ENCODE measurements at regions of chr6 and their contacts with region 1.

Region 1: DNA sequence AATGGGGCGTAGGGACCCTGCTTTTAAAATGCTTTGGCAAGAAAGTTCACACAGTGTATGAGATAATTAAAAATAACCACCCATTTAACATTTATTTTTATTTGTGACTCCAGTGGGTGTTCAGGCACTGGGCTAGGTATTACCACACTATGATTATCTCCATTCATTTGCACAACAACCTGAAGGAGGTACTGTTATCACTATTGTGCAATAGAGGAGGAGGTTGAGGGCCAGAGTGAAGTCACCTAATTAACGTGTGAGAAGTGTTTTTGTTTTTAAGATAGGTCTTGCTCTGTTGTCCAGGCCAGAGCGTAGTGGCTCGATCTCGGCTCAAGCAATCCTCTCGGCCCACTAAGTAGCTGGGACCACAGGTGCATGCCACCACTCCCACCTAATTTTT is 29.2 kb downstream of the MAK start:
- DNase-seq: no peak
- H3K4me3 ChIP-seq: no peak overlapping the region
- H3K27ac ChIP-seq: no peak overlapping the region
- H3K4me1 ChIP-seq: no peaks in the 10 kb centered on the region
- CTCF ChIP-seq: no peak

Region 2: DNA sequence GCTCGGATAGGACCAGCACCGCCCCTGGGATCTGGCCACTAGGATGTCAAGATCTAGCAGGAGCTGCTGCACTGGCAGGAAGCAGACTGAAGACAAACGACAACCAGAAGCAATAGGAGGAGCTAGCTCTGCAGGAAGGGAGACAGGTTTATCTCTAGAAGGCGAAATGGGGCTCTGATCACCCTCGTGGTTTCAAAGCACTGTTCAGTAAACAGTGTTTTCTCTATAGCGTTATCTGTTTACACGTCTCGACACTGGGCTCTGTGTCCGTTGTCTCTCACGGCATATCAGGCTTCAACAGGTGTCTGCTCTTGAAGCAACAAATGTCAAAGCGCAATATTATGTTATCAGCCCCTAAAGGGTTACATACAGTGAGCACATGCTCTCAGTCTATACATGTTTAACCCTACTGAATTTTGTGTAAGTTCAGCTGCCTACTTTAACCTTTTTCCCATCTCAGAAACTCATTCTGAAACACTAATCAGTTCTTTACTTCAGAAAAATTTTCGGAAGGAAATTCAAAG is 37.7 kb before region 1 on chr6:
- CTCF ChIA-PET with region 1: no interaction called
- POLR2A ChIA-PET with region 1: interaction called, 10 read pairs
- intact Hi-C with region 1: no loop called
- DNase-seq: no peak
- H3K4me3 ChIP-seq: no peak overlapping the region
- H3K27ac ChIP-seq: no peak overlapping the region
- H3K4me1 ChIP-seq: no peaks in the 10 kb centered on the region
- CTCF ChIP-seq: no peak

Region 3: DNA sequence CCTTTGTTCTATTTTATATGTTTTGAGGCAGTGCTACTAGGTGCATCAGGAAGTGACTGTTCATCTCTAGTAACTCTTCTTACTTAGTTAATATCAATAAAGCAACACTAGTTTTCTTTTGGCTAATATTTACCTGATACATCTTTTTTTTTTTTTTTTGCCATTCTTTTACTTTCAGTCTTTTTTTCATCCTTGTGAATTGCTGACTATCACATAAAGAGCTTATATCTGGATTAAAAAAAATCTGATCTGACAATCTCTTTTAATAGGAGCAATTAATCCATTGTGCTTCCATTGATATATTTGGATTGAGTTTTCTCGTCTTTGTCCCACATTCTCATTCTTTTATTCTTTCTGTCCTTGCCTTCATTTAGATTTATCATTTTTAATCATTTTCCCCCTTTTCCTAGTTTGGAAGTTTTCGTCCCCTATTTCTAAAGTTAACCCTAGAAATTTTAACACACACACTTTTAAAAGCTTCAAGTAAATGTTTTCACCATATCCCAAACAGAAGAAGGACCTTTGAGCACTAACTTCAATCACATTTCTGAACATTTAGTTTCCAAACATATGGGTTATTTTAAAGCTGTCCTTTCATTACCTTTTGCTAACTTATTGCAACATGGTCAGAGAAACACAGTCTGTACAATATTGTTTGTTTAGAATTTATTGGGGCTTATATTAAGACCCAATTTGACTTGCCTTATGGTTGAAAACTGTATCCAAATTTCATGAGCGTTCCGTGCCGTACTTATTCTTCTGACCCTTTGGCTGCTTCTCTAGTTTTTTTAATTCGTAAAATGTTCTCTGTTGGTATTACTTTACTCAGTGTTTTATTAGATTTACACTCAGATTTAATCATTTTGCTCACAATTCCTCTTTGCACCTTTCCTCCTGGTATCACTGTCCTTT is 140.7 kb after region 1 on chr6:
- CTCF ChIA-PET with region 1: no interaction called
- POLR2A ChIA-PET with region 1: no interaction called
- intact Hi-C with region 1: no loop called
- DNase-seq: no peak
- H3K4me3 ChIP-seq: no peak overlapping the region
- H3K27ac ChIP-seq: no peak overlapping the region
- H3K4me1 ChIP-seq: no peaks in the 10 kb centered on the region
- CTCF ChIP-seq: no peak